ENCODE measurements at regions of chr17 and their contacts with region 1.

Region 1: GRCh38 chr17:45021607-45022287 is 29.7 kb downstream of the DCAKD start:
- DNase-seq: peak; percentile 89
- H3K4me3 ChIP-seq: peak overlapping the region; percentile 18 to 49 (median 38)
- H3K27ac ChIP-seq: peak overlapping the region; percentile 82 to 89 (median 83)
- H3K4me1 ChIP-seq: peaks cover 5 to 47% (median 41%) of the 10 kb centered on the region in 4 donors
- H3K27me3 ChIP-seq: no peaks in the 10 kb centered on the region
- CTCF ChIP-seq: peak; percentile 34 to 95 (median 58)
- EP300 ChIP-seq: no peak
- POLR2A ChIP-seq: no peak

Region 2: DNA sequence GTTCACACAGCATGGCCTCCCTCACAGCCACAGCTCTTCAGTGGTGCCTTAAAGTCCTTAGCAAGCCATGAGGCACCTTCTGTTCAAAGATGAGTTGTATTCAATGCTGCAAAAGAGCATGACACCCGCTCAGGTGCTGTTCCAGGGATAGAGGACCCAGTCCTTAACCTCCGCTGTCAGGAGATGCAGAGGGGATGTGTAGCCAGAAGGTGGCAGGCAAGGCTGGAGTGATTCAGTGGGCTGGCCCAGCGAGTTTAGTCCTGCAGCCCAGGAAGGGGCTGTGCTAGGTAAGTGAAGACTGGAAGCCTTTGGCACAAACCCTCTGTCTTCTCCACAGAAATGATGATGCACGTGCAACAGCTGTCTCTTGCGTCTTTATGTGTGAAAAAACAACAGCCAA is 288.0 kb before region 1 on chr17:
- intact Hi-C with region 1: no loop called
- DNase-seq: no peak
- H3K4me3 ChIP-seq: no peak overlapping the region
- H3K27ac ChIP-seq: no peak overlapping the region
- H3K4me1 ChIP-seq: no peaks in the 10 kb centered on the region
- H3K27me3 ChIP-seq: no peaks in the 10 kb centered on the region
- CTCF ChIP-seq: no peak
- EP300 ChIP-seq: no peak
- POLR2A ChIP-seq: no peak

Region 3: GRCh38 chr17:44775136-44775837 is 246.5 kb before region 1 on chr17:
- intact Hi-C with region 1: loop called (anchors 1 kb)
- DNase-seq: peak; percentile 99
- H3K4me3 ChIP-seq: peak overlapping the region; percentile 35 to 70 (median 56)
- H3K27ac ChIP-seq: peak overlapping the region; percentile 43 to 90 (median 80)
- H3K4me1 ChIP-seq: peaks cover 0 to 53% (median 35%) of the 10 kb centered on the region in 4 donors
- H3K27me3 ChIP-seq: peaks cover 5 to 10% (median 9%) of the 10 kb centered on the region in 3 donors
- CTCF ChIP-seq: peak in 1 of 4 experiments; percentile 28
- EP300 ChIP-seq: no peak
- POLR2A ChIP-seq: no peak

Region 4: DNA sequence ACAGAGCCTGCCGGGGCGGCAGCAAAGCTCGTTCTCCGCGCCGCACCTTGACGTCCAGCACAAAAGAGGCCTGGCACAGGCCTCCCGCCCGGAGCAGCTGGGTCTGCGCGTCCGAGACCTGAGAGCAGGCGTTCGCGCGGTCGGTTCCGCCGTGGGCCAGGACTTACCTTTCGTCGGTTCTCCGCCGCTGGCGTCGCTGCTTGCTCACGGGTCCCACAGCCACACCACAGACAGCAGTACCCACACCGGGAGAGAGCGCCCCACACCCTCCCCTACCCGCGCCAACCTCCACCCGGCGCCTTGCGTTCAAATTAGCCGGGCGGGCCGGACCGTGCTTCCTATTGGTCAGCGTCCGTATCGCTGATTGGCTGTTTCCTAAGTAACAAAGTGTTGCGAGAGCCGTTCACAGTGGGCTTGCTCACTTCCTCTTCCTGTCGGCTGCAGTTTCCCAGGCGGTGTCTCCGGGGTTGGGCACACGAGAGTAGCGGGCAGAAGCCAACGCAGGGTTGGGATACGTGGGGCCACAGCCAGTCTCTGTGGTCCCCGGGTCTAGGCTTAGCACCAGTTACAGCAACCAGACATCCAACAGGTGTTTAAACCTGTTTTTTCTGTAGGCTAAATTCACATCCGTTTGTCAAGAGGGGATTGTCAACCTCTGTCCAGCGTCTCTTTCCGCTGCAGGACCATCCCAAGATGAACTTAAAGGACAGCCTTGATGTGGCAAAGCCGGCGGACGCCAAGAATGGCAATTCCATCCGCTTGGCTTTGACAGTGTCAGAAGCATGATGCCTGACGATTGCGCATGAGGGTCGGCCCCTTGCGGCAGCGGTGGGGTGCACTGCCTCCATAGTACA is 74.1 kb before region 1 on chr17 and contains the start of gene KIF18B:
- intact Hi-C with region 1: loop called (anchors 1 kb)
- DNase-seq: peak; percentile 95
- H3K4me3 ChIP-seq: peak within 1 kb of the TSS; percentile 27 to 61 (median 50)
- H3K27ac ChIP-seq: peak within 1 kb of the TSS; percentile 42 to 65 (median 60)
- H3K4me1 ChIP-seq: peaks cover 0 to 12% (median 9%) of the 10 kb centered on the region in 4 donors
- H3K27me3 ChIP-seq: no peaks in the 10 kb centered on the region
- CTCF ChIP-seq: no peak
- EP300 ChIP-seq: no peak
- POLR2A ChIP-seq: peak; percentile 52 to 64
- total RNA-seq, gene KIF18B: under 0.01 to 1.4 (median 0.30) TPM

Region 5: DNA sequence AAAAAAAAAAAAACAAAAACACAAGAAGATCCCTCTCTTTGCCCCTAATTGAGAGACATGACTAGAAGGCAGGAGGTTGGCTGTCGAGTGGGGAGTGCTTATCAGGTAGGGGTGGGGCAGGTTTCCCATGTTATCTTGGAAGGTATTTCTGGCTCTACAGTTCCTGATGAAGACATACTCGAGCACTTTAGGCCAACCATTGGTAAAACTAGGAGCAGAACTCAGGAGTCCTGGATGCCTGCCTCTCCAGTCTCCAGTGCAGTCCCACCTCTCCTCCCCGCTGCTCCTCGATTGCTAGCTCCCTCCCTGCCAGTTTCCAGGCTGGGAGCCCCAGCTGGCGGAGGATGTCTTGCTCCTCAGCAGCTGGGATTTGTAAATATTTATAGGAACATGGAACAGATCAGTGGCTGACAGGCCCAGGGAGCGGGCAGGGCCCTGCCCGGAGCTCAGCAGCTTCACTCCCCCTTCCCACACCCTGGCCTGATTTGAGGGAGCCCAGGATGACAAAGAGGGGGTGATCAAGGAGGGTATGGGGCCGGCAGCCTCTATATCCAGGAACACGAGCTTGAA is 42.2 kb before region 1 on chr17:
- intact Hi-C with region 1: loop called (anchors 2 kb)
- DNase-seq: peak; percentile 92
- H3K4me3 ChIP-seq: no peak overlapping the region
- H3K27ac ChIP-seq: peak overlapping the region; percentile 72 to 82 (median 78)
- H3K4me1 ChIP-seq: peaks cover 0 to 62% (median 53%) of the 10 kb centered on the region in 4 donors
- H3K27me3 ChIP-seq: no peaks in the 10 kb centered on the region
- CTCF ChIP-seq: no peak
- EP300 ChIP-seq: peak in 1 of 4 donors; percentile 57
- POLR2A ChIP-seq: no peak

Region 6: GRCh38 chr17:44989552-44990138 is 32.1 kb before region 1 on chr17:
- intact Hi-C with region 1: no loop called
- DNase-seq: no peak
- H3K4me3 ChIP-seq: no peak overlapping the region
- H3K27ac ChIP-seq: no peak overlapping the region
- H3K4me1 ChIP-seq: peaks cover 0 to 10% (median 9%) of the 10 kb centered on the region in 4 donors
- H3K27me3 ChIP-seq: peaks cover 0 to 4% (median 0%) of the 10 kb centered on the region in 3 donors
- CTCF ChIP-seq: no peak
- EP300 ChIP-seq: no peak
- POLR2A ChIP-seq: no peak

Region 7: GRCh38 chr17:45073414-45074070 is 51.8 kb after region 1 on chr17:
- intact Hi-C with region 1: no loop called
- DNase-seq: peak; percentile 83
- H3K4me3 ChIP-seq: no peak overlapping the region
- H3K27ac ChIP-seq: peak overlapping the region; percentile 10 to 72 (median 46)
- H3K4me1 ChIP-seq: peaks cover 0 to 41% (median 19%) of the 10 kb centered on the region in 4 donors
- H3K27me3 ChIP-seq: no peaks in the 10 kb centered on the region
- CTCF ChIP-seq: no peak
- EP300 ChIP-seq: no peak
- POLR2A ChIP-seq: no peak

Region 8: GRCh38 chr17:45098869-45099616 is 77.3 kb after region 1 on chr17:
- intact Hi-C with region 1: loop called (anchors 2 kb)
- DNase-seq: peak; percentile 97
- H3K4me3 ChIP-seq: no peak overlapping the region
- H3K27ac ChIP-seq: peak overlapping the region; percentile 30 to 79 (median 50)
- H3K4me1 ChIP-seq: peaks cover 0 to 25% (median 21%) of the 10 kb centered on the region in 4 donors
- H3K27me3 ChIP-seq: no peaks in the 10 kb centered on the region
- CTCF ChIP-seq: peak; percentile 77 to 92 (median 86)
- EP300 ChIP-seq: no peak
- POLR2A ChIP-seq: no peak

Measured in sigmoid colon (tissue), 7 donors.